Right ventricle myocardium inferior (tissue), 1 donor: ENCODE measurements at regions of chr6 and their contacts with region 1.

Region 1: GRCh38 chr6:21593412-21593926 is at the start of gene SOX4:
- DNase-seq: peak; percentile 94
- ATAC-seq: peak; percentile 83
- total RNA-seq, gene SOX4: 7.8 TPM

Region 2: GRCh38 chr6:20873425-20874190 is 719.9 kb before region 1 on chr6:
- intact Hi-C with region 1: loop called (anchors 5 kb)
- DNase-seq: no peak
- ATAC-seq: no peak

Region 3: GRCh38 chr6:21188505-21189223 is 404.8 kb before region 1 on chr6:
- intact Hi-C with region 1: no loop called
- DNase-seq: no peak
- ATAC-seq: no peak

Region 4: GRCh38 chr6:21610341-21610740 is 16.9 kb after region 1 on chr6:
- intact Hi-C with region 1: no loop called
- DNase-seq: no peak
- ATAC-seq: no peak

Region 5: GRCh38 chr6:21634582-21634981 is 41.1 kb after region 1 on chr6:
- intact Hi-C with region 1: no loop called
- DNase-seq: no peak
- ATAC-seq: no peak

Region 6: DNA sequence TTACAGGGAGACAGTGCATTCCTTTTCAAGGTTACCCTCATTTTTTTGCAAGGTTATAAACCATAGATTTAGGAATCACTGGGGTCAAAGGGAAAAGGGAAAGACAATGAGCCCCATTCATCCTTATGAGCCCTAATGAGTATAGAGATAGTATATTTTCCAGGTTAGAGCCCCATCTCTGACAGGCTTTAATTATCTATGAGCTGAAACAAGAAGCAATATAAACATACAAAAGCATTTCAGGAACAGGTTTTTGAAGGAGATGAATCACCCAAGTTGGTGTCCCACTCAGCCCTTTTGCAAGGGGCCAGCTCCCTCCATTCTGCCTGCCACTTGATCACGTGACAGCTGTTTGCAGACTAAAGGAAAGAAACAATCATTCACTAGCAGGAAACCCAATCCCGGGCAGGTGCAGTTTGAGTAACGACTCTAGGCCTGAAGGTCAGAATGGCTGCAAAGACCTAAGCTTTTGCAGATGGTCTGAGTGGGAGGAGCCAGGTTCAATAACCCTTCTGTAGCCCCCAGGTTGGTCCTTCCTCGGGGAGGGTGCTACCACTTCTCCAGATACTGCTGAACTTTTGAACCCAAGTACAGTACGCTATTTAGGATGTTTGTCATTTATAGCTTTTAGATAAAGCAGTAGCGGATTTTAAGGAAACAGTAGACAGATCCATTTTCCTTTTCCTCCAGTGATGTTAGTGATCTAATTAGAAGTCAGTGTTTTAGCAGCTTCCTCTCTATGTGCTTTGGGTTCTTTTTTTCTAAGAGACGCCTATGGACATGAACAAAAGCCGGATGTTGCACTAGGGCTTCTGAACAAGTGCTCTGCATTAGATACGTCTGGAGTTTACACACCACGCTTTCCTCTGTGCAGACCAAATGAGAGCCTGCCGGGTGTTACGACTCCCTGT is 253.3 kb after region 1 on chr6:
- intact Hi-C with region 1: loop called (anchors 5 kb)
- DNase-seq: no peak
- ATAC-seq: peak; percentile 9

Region 7: GRCh38 chr6:22668307-22668706 is 1074.8 kb after region 1 on chr6:
- intact Hi-C with region 1: loop called (anchors 5 kb)
- DNase-seq: no peak
- ATAC-seq: peak; percentile 96

Region 8: DNA sequence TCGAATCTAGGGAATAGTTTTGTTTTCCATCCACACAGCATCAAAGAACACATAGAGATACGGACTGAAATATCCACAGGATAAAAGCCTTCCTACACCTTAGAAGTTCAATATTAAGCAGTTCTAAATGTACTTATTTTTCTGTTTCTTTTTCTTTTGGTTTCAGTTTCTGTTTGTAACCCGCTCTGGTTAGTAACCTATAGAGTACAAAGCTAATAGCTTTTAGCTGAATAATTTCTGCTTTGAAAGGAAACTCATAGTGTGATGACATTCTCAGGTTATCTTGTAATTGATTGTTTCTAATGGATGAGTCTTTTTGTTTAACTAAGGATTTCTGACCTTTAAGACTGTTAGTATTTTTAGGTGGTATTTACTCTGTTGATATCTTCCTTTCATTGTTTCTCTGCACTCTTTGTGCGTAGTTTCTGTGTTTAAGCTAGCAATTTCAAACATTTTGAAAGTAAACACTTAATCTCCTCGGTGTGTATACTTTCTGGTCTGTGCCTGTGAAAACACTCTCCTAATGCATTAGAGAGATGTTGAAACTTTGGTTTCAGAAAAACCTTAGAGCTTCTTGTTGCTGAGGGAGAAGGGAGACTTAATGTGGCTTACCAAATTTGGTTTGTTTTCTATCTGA is 1361.4 kb after region 1 on chr6:
- intact Hi-C with region 1: loop called (anchors 5 kb)
- DNase-seq: no peak
- ATAC-seq: no peak